K562 (cell line): ENCODE measurements at regions of chr1 and their contacts with region 1.

Region 1: DNA sequence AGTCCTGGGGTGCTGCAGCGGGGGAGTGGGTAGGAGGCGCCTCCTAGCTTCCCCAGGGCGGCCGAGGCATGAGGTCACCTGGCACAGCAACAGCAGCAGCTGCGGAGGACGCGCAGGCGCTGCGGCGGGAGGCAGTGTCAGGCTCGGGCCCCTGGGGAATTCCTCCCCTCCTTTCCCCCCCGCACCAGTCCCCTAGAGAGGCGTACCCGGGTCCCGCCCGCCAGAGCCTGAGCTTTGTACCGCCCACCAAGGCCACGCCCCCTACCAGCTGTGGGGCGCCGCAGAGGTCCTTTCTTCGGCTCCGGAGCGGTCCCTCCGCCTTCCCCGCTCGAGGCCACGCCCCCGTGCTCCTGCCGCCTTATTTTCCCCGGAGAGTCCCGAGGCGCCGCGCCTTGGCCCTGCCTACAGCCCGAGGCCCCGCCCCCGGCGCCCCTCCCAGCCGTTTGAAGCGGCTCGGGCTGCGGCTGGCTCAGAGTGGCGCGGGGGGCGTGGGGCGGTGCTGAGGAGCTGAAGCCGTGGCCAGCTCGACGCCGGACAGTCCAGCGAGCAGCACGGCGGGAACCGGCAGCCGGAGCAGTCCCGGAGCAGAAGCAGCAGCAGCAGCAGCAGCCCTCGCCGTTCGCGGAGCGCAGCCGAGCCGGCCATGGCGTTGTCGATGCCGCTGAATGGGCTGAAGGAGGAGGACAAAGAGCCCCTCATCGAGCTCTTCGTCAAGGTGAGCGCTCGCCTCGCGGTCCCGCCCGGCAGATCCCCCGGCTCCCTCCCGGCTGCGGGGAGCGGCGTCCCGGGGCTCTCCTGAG is at the start of gene CLIC4:
- DNase-seq: peak; percentile 98 to 100 (median 98)
- ATAC-seq: peak; percentile 93
- H3K4me3 ChIP-seq: peak within 1 kb of the TSS; percentile 71
- H3K27ac ChIP-seq: peak within 1 kb of the TSS; percentile 78
- H3K4me1 ChIP-seq: peaks cover 40 to 47% of the 10 kb centered on the region in 2 experiments
- H3K27me3 ChIP-seq: no peaks in the 10 kb centered on the region
- CTCF ChIP-seq: peak; percentile 26 to 61 (median 46); a peak in 3 of 6 replicates
- EP300 ChIP-seq: peak; percentile 16; the same call in 1 of the 2 replicates
- POLR2A ChIP-seq: peak; percentile 89
- RAD21 ChIP-seq: peak; percentile 51 to 70
- polyA plus RNA-seq, gene CLIC4: 16.0 to 18.9 TPM

Region 2: DNA sequence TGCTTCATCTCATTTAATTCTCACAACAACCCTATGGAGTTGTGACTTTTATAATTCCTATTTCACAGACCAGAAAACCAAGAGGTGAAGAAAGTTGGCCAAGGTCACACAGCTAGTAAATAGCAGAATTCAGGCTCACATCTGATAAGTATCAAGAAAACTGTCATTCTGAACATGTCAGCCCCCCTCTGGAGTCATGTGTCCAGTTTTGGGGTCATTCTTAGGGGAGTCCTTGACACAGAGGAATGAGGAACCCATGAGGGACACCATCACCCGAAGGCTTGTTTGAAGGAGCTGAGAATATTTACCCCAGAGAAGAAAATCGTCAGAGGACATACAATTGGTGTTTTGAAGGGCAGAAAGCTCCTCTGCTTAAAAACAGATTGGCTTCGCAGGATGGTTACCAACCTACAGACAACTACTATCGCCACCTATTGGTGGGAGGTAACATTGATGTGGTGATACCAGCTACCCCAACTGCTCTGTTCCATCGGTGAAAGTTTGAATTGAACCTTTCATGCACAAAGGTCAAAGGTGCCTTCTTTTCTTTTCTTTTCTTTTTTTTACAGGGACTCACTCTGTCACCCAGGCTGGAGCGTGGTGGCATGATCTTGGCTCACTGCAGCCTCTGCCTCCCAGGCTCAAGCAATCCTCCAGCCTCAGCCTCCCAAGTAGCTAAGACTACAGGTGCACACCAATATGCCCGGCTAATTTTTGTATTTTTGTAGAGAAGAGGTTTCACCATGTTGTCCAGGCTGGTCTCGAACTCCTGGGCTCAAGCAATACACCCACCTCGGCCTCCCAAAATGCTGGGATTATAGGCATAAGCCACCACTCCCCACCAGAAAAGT is 157.9 kb before region 1 on chr1:
- CTCF ChIA-PET with region 1: no interaction called
- POLR2A ChIA-PET with region 1: no interaction called
- in situ Hi-C with region 1: no loop called
- intact Hi-C with region 1: no loop called
- DNase-seq: peak; percentile 68 to 78 (median 72)
- ATAC-seq: peak; percentile 88
- H3K4me3 ChIP-seq: no peak overlapping the region
- H3K27ac ChIP-seq: no peak overlapping the region
- H3K4me1 ChIP-seq: peaks cover 14 to 16% of the 10 kb centered on the region in 2 experiments; a peak in 4 of 5 replicates
- H3K27me3 ChIP-seq: peaks cover 32 to 60% of the 10 kb centered on the region in 2 experiments; a peak in 4 of 5 replicates
- CTCF ChIP-seq: peak; percentile 71 to 84 (median 76)
- EP300 ChIP-seq: no peak
- POLR2A ChIP-seq: no peak
- RAD21 ChIP-seq: peak; percentile 16 to 62; a peak in 2 of 4 replicates

Region 3: GRCh38 chr1:24642481-24643361 is 102.4 kb before region 1 on chr1 and contains the start of gene SRRM1:
- CTCF ChIA-PET with region 1: no interaction called
- POLR2A ChIA-PET with region 1: interaction called, 3 read pairs
- in situ Hi-C with region 1: no loop called
- intact Hi-C with region 1: loop called (anchors 5 kb)
- DNase-seq: peak; percentile 98 to 100 (median 98)
- ATAC-seq: peak; percentile 96
- H3K4me3 ChIP-seq: peak within 1 kb of the TSS; percentile 96
- H3K27ac ChIP-seq: peak within 1 kb of the TSS; percentile 94
- H3K4me1 ChIP-seq: peaks cover 19% of the 10 kb centered on the region in 2 experiments
- H3K27me3 ChIP-seq: peaks cover under 1 to 2% of the 10 kb centered on the region in 2 experiments; a peak in 1 of 5 replicates
- CTCF ChIP-seq: peak; percentile 12 to 49 (median 33); a peak in 3 of 6 replicates
- EP300 ChIP-seq: peak; percentile 53
- POLR2A ChIP-seq: peak; percentile 98
- RAD21 ChIP-seq: no peak; a peak in 1 of 4 replicates
- polyA plus RNA-seq, gene SRRM1: 115 to 268 TPM

Region 4: DNA sequence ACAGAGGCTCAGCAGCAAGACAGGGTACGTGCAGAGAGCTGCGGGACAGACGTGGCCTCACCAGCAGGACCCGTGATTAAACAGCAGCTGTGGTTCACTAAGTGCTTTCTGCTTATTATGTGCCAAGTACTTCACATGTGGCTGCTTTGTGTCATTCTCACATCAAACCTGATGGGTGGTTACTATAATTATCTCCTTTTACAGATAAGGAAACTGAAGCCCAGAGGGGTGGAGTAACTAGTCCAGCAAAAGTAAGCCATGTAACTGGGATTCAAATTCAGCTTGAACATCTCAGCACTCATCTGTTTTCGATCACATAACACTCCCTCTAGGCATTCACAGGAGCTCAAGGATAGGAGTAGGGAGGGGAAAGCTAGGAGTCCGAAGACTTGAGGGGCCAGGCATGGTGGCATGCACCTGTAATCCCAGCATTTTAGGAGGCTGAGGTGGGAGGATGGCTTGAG is 50.7 kb before region 1 on chr1:
- CTCF ChIA-PET with region 1: no interaction called
- POLR2A ChIA-PET with region 1: interaction called, 7 read pairs
- in situ Hi-C with region 1: no loop called
- intact Hi-C with region 1: loop called (anchors 5 kb)
- DNase-seq: peak in 2 of 4 experiments; percentile 35 to 55
- ATAC-seq: peak; percentile 56
- H3K4me3 ChIP-seq: no peak overlapping the region
- H3K27ac ChIP-seq: peak overlapping the region; percentile 25; the same call in 1 of the 3 replicates
- H3K4me1 ChIP-seq: peaks cover 13 to 26% of the 10 kb centered on the region in 2 experiments
- H3K27me3 ChIP-seq: no peaks in the 10 kb centered on the region
- CTCF ChIP-seq: no peak
- EP300 ChIP-seq: no peak
- POLR2A ChIP-seq: no peak
- RAD21 ChIP-seq: 0 out of 4 replicates have a peak, but pooled peaks of 1 of the 2 experiments have one; percentile 20

Region 5: DNA sequence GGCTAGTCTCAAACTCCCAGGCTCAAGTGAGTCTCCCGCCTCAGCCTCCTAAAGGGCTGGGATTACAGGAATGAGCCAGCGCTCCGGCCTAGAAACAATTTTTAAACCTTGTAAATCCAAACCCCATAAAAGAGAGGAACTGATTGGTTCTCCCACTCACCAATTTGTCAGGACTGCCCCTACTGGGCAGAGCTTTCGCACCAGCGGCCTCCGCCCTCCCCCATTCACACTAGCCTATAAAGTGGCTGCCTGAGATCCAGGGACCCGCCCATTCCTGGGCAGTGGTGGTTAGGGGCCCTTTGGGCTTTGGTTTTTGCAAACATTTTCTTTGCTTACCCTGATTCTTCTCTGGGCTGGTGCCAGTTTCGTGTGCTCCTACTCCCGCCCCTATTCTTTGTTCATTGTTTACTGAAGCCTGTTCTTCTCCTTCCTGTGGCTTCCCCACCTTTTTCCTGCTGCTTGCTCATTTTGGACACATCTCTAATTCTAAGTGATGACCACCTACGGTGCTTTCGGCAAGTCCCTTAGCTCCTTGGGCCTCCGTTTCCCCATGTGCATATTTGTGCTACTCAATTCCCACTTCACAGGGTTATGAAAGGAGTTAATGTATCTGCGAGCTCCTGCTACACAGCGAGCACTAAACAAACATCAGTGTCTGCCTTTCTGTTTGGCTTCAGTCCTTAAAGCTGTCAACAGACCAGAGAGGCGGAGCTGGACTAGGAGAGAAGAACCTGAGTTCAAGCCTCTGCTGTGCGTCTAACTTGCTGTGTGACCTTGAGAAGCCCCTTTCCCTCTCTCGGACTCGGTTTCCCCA is 39.6 kb before region 1 on chr1:
- CTCF ChIA-PET with region 1: no interaction called
- POLR2A ChIA-PET with region 1: interaction called, 10 read pairs
- in situ Hi-C with region 1: no loop called
- intact Hi-C with region 1: loop called (anchors 2 kb)
- DNase-seq: peak; percentile 92 to 99 (median 94)
- ATAC-seq: peak; percentile 100
- H3K4me3 ChIP-seq: peak overlapping the region; percentile 4; the same call in 1 of the 2 replicates
- H3K27ac ChIP-seq: peak overlapping the region; percentile 43; the same call in 2 of the 3 replicates
- H3K4me1 ChIP-seq: peaks cover 15 to 26% of the 10 kb centered on the region in 2 experiments
- H3K27me3 ChIP-seq: no peaks in the 10 kb centered on the region
- CTCF ChIP-seq: no peak
- EP300 ChIP-seq: no peak
- POLR2A ChIP-seq: peak; percentile 66; the same call in 1 of the 2 replicates
- RAD21 ChIP-seq: no peak

Region 6: DNA sequence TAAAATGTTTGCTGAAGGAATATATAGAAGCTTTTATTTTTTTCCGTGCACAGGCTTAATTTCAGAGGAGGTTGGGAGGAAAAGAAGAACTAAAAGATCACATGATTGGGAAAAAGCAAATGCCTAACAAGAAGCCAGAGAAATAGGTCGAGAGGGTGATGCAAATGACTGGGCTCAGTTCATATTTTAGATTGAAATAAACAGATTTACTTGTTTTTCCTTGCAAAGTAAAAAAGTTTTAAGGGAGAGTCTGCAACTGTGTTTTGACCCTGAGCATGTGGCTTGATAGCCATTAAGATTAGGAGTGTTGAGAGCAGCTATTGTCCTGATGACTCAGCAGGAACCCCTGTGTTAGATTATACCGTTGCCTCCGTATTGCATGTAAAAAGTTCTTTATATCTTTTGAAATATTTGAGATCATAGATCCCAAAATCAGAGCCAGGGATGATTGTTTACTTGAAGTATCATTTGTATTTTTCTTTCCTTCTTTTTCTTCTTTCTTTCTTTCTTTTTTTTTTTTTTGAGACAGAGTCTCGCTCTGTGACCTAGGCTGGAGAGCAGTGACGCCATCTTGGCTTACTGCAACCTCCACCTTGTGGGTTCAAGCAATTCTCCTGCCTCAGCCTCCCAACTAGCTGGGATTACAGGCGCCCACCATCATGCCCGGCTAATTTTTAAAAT is 20.3 kb after region 1 on chr1:
- CTCF ChIA-PET with region 1: no interaction called
- POLR2A ChIA-PET with region 1: interaction called, 22 read pairs
- in situ Hi-C with region 1: no loop called
- intact Hi-C with region 1: loop called (anchors 2 kb)
- DNase-seq: peak; percentile 62 to 87 (median 74)
- ATAC-seq: peak; percentile 86
- H3K4me3 ChIP-seq: no peak overlapping the region
- H3K27ac ChIP-seq: peak overlapping the region; percentile 80
- H3K4me1 ChIP-seq: peaks cover 21 to 44% of the 10 kb centered on the region in 2 experiments
- H3K27me3 ChIP-seq: no peaks in the 10 kb centered on the region
- CTCF ChIP-seq: no peak
- EP300 ChIP-seq: peak; percentile 82
- POLR2A ChIP-seq: peak; percentile 47; the same call in 1 of the 2 replicates
- RAD21 ChIP-seq: peak in 1 of 2 experiments; percentile 27; a peak in 1 of 4 replicates

Region 7: DNA sequence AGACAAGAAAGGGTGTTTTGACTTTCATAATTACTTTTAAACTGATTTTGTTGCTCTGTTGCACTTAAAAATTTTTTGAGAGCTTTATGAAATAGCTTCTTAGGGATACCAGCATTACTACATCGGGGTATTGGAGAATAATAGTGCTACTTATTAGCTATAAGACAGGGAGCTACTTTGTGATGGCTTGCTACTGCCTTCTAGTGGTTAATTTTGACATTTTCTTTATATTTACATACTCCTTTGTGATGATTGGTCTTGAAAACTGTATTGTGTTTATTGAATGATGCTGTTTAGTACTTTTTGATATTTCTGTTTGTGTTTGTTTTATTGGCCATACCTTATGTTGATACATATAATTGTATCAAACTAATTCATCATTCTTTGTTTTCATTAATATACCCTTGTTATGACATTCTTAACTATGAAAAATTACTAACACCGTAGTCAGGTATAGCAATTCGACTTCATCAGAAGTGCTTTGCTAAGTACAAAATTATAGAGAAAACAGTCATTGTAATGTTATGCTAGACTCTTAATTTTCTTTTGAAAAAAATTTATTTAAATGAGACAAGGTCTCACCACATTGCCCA is 85.7 kb after region 1 on chr1:
- CTCF ChIA-PET with region 1: interaction called, 4 read pairs
- POLR2A ChIA-PET with region 1: interaction called, 6 read pairs
- in situ Hi-C with region 1: no loop called
- intact Hi-C with region 1: loop called (anchors 5 kb)
- DNase-seq: peak; percentile 52 to 68 (median 54)
- ATAC-seq: peak; percentile 86
- H3K4me3 ChIP-seq: no peak overlapping the region
- H3K27ac ChIP-seq: no peak overlapping the region
- H3K4me1 ChIP-seq: no peaks in the 10 kb centered on the region
- H3K27me3 ChIP-seq: no peaks in the 10 kb centered on the region
- CTCF ChIP-seq: peak; percentile 53 to 96 (median 72); a peak in 5 of 6 replicates
- EP300 ChIP-seq: no peak
- POLR2A ChIP-seq: no peak
- RAD21 ChIP-seq: peak; percentile 92 to 96

Region 8: DNA sequence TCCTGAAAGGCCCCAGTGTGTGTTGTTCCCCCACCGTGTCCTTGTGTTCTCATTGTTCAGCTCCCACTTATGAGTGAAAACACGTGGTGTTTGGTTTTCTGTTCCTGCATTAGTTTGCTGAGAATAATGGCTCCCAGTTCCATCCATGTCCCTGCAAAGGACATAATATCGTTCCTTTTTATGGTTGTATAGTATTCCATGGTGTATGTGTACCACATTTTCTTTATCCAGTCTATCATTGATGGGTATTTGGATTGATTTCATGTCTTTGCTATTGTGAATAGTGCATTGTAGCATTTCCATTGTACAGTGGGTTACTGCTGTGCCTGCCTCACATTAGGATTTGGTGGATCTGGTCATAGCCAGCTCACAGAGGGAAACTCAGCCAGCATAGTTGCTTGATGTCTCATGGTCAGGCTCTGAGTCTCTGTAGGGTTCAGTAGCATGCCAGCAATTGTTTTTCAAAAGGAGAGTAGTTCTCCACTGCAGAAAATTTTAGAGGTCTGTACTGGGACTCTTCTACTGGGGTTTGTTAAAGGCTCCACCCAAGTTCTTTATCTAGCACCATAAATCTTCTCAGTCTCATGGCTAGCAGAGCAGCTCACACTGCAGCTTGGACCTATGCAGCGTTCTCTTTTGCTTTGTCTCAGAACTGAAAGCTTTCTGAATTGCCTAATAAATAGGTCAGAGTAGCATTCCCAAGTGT is 144.0 kb after region 1 on chr1:
- CTCF ChIA-PET with region 1: no interaction called
- POLR2A ChIA-PET with region 1: no interaction called
- in situ Hi-C with region 1: no loop called
- intact Hi-C with region 1: no loop called
- DNase-seq: no peak
- ATAC-seq: no peak
- H3K4me3 ChIP-seq: no peak overlapping the region
- H3K27ac ChIP-seq: no peak overlapping the region
- H3K4me1 ChIP-seq: no peaks in the 10 kb centered on the region; a peak in 1 of 5 replicates
- H3K27me3 ChIP-seq: peaks cover 0 to 9% of the 10 kb centered on the region in 2 experiments; a peak in 2 of 5 replicates
- CTCF ChIP-seq: no peak
- EP300 ChIP-seq: no peak
- POLR2A ChIP-seq: no peak
- RAD21 ChIP-seq: no peak